Spleen (tissue), 13 donors: ENCODE measurements at regions of chr7 and their contacts with region 1.

Region 1: DNA sequence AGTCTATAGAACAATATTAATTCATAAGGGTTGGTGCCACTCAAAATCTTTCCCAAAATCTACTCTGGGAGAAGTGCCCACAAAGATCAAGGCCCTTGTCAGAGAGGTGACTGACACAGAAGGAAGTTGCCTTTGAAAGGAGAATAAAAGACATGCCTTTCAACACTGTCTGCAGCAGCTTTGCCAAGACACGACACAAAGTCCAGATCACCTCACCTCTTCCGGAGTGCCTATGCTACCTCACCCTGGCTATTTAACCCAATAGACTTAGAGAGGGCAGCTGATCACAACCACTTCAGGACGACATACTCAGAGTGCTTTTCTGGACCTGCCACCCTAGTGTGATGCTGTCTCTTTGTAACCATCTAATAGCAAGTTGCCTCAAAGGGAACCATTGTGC is 49.0 kb upstream of the YAE1 start:
- DNase-seq: no peak
- H3K4me3 ChIP-seq: no peak overlapping the region
- H3K27ac ChIP-seq: no peak overlapping the region
- H3K4me1 ChIP-seq: peaks cover 0 to 8% (median 5%) of the 10 kb centered on the region in 6 donors
- H3K27me3 ChIP-seq: no peaks in the 10 kb centered on the region
- CTCF ChIP-seq: no peak
- POLR2A ChIP-seq: no peak

Region 2: DNA sequence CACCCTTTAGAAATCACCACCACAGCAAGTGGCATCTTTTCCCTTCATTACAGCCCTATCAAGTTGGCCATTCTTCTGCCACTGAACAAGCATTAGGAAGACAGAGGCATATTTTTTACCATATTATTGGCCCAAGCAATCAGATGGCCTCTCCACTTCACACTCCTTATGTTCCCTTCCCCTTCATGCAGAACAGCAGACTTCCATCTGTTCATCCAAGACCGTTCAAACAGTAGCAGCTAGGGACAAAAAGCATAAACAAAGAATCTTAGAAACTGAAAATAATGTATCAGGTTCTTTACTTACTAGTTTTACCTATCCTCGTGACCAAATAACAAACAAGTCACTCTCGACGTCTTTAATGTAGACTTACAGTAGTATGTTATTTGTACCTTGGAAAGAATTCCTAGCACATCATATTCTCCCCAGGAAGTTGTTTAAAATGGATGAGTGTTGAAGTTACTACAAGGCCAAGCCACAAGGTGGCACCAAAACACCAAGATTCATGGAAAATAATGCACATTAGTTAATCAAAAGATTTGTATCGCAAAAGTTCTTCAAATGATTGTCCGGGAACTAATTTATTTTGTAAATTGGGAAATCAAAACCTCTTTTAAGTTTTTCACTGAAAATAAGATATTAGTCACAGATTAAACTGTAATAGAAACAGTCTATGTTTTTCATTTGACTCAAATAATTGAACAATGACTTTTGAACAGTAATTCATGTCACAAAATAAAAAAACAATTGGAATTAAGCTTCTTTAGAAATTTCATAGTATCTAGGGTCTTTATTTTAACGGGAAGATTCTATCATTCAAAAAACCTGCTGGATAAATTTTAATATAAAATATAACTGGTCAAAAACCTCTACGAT is 720.4 kb before region 1 on chr7:
- intact Hi-C with region 1: loop called (anchors 2 kb)
- DNase-seq: no peak
- H3K4me3 ChIP-seq: no peak overlapping the region
- H3K27ac ChIP-seq: no peak overlapping the region
- H3K4me1 ChIP-seq: peaks cover 0 to 5% (median 0%) of the 10 kb centered on the region in 6 donors
- H3K27me3 ChIP-seq: no peaks in the 10 kb centered on the region
- CTCF ChIP-seq: peak; percentile 43 to 79 (median 68)
- POLR2A ChIP-seq: no peak